ENCODE measurements at regions of chr3 and their contacts with region 1.

Region 1: GRCh38 chr3:65785065-65785645 is 253.6 kb downstream of the MAGI1 start:
- DNase-seq: no peak
- ATAC-seq: peak in 2 of 4 donors; percentile 38 to 53
- H3K4me3 ChIP-seq: no peak overlapping the region
- H3K27ac ChIP-seq: no peak overlapping the region
- H3K4me1 ChIP-seq: peaks cover 0 to 30% (median 12%) of the 10 kb centered on the region in 12 donors
- H3K27me3 ChIP-seq: no peaks in the 10 kb centered on the region
- CTCF ChIP-seq: peak; percentile 63 to 89 (median 76)
- POLR2A ChIP-seq: no peak

Region 2: DNA sequence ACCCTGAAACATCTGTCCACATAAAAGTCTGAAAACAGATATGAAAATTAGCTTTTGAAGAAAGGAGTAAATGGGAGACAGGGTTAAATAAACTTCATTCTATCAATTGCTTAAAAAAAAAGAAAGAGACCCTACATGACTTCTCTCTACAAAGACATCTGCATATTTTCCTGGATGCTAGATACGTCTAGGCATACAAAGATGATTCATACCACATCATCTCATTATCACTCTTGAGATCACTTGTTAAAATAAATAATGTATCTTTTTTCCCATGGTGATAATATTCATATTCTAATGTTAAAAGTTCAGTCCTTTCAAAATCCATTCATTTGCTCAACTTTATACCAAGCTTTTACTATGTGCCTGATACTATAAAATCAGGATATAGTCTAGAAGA is 42.2 kb before region 1 on chr3:
- intact Hi-C with region 1: no loop called
- DNase-seq: no peak
- ATAC-seq: no peak
- H3K4me3 ChIP-seq: no peak overlapping the region
- H3K27ac ChIP-seq: no peak overlapping the region
- H3K4me1 ChIP-seq: peaks cover 0 to 18% (median 2%) of the 10 kb centered on the region in 12 donors
- H3K27me3 ChIP-seq: no peaks in the 10 kb centered on the region
- CTCF ChIP-seq: no peak
- POLR2A ChIP-seq: no peak

Region 3: GRCh38 chr3:65902304-65902793 is 117.2 kb after region 1 on chr3:
- intact Hi-C with region 1: loop called in 1 of 10 experiments (anchors 10 kb)
- DNase-seq: no peak
- ATAC-seq: no peak
- H3K4me3 ChIP-seq: no peak overlapping the region
- H3K27ac ChIP-seq: no peak overlapping the region
- H3K4me1 ChIP-seq: peaks cover 0 to 38% (median 20%) of the 10 kb centered on the region in 12 donors
- H3K27me3 ChIP-seq: no peaks in the 10 kb centered on the region
- CTCF ChIP-seq: no peak
- POLR2A ChIP-seq: no peak

Region 4: DNA sequence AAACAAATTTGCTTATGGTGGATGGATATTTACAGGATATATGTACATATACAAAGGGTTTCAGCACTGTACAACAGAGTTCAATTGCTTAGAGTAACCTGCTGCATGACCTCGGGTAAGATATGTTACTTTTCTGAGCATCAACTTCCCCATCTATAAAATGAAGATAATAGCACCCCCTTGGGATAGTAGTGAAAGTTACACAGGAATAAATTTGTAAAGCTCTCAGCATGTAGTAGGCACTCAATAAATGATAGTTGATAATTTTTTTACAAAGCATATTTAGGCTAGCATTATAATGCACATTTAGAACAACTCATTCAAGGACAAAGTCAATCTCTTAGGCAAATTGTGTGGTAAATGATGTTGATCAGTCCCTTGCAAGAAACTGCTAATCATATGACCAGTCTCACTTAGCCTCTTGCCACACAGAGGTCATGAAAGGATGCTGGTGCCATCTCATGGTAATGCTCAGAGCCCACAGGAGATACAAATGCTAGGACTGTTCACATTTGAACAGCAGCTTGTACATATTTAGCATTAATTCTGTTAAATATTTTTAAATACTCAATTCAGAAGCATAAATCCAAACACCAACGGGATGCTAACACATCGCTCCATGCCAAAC is 129.7 kb after region 1 on chr3:
- intact Hi-C with region 1: loop called in 3 of 10 experiments (anchors 10 kb)
- DNase-seq: no peak
- ATAC-seq: peak in 1 of 4 donors; percentile 53
- H3K4me3 ChIP-seq: no peak overlapping the region
- H3K27ac ChIP-seq: no peak overlapping the region
- H3K4me1 ChIP-seq: peaks cover 0 to 53% (median 22%) of the 10 kb centered on the region in 12 donors
- H3K27me3 ChIP-seq: no peaks in the 10 kb centered on the region
- CTCF ChIP-seq: peak in 1 of 12 donors; percentile 16
- POLR2A ChIP-seq: no peak

Region 5: DNA sequence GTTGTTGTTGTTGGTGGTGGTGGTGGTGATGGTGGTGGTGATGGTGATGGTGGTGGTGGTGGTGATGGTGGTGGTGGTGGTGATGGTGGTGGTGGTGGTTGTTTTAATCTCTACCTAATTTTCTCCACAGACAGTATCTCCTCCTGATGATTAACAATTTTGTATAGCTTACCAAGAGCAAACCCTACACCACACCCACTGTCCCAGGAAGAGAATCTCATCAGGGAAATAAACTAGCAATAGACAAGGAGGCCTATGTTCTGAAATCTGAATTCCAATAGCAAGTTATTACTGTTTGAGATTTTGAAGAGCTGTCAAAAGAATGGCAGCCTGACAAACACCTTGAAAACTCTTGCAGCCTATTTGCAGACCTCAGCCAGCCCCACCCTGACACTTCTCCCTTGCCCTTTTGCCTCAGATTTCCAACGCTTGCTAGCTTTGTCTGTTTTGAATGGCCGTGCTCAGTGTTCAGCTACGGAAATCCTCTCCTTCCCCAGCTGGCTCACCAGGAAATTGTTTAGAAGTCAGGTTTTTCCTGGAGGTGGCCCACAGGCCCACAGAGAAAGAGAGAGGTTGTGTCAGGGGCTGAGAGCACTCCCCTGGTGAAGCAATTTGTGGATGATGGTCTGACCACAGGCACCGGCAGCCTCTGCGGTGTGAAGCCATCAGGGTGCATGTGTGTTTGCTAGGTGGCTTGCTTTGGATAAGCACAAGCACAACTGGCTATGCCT is 151.9 kb after region 1 on chr3:
- intact Hi-C with region 1: no loop called
- DNase-seq: peak in 3 of 5 donors; percentile 37 to 49 (median 42)
- ATAC-seq: peak; percentile 44 to 69 (median 56)
- H3K4me3 ChIP-seq: no peak overlapping the region
- H3K27ac ChIP-seq: peak overlapping the region in 10 of 12 donors; percentile 4 to 61 (median 48)
- H3K4me1 ChIP-seq: peaks cover 0 to 57% (median 35%) of the 10 kb centered on the region in 12 donors
- H3K27me3 ChIP-seq: no peaks in the 10 kb centered on the region
- CTCF ChIP-seq: no peak
- POLR2A ChIP-seq: no peak

Region 6: DNA sequence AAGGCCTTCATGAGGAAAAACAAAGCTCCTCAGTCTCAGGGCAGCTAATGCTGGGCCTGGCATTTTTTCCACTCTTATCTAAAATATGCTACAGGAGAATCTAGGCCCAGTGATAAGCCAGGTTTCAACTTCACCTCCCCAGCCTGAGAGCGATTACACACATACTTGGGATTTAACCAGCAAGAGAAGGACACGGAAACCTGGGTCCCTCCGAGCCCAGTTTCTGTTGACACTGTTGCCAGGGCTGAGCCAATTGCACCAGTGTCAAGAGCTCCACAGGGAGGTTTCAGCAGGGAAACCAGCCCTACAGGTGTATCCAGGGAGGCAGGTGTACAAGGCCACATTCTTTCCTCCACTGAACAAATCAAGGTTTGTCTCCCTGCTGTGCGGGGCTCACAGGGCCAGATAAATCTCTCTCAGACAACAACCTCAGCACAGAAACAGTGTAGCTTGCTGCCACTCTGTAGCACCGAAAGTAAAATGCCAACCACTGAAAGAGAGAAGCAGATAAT is 168.2 kb after region 1 on chr3:
- intact Hi-C with region 1: loop called in 1 of 10 experiments (anchors 10 kb)
- DNase-seq: peak in 3 of 5 donors; percentile 19 to 40 (median 28)
- ATAC-seq: peak; percentile 44 to 59 (median 50)
- H3K4me3 ChIP-seq: peak overlapping the region in 3 of 12 donors; percentile 18 to 35 (median 18)
- H3K27ac ChIP-seq: peak overlapping the region; percentile 29 to 81 (median 75)
- H3K4me1 ChIP-seq: peaks cover 14 to 69% (median 46%) of the 10 kb centered on the region in 12 donors
- H3K27me3 ChIP-seq: no peaks in the 10 kb centered on the region
- CTCF ChIP-seq: no peak
- POLR2A ChIP-seq: no peak

Region 7: DNA sequence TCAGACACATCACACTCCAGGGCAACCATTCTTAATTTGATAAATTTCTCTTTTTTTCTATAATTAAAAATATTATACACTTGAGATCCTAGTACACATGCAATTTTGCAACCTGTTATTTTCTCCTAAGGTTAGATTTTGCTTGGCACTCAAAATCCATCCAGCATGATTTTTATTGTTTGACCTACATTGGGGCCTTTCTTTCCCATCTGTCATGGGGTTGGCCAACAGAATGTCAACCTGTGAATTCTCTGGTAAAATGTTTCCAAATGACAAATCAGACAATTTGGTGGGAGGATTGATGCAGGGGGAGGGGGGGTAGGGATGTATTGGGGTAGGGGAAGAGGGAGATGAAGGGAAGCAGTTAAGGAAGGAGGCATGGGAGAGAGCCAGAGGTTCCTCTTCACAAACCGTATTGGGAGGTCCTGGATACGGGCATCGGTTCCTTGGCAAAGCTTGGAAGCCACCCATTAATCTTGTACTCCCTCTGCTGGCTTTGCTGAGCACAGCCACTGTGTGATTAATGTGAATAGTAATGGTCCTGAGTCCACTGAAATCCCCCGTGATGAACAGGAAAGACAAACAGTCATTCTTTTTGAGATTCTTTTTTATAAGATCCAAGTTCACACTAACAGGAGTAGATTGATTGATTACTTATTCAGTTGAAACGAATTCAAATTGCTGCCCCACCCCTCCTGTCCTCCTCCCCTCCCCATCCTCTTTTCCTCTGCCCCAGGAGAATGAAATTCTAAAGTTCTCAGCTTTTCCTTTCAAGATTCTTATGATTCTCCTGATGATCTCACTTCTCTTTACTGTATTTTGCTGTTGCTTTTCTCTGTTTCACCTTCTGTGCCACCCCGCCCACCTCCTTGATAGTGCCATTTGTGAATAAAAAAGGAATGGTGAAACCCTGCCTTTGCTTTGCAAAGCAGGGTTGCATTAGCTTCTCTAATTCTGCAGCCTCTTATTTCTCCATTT is 353.5 kb after region 1 on chr3:
- intact Hi-C with region 1: loop called (anchors 1 to 5 kb)
- DNase-seq: peak in 4 of 5 donors; percentile 42 to 63 (median 54)
- ATAC-seq: peak; percentile 75 to 93 (median 89)
- H3K4me3 ChIP-seq: no peak overlapping the region
- H3K27ac ChIP-seq: peak overlapping the region in 5 of 12 donors; percentile 6 to 21 (median 11)
- H3K4me1 ChIP-seq: peaks cover 0 to 15% (median 2%) of the 10 kb centered on the region in 12 donors
- H3K27me3 ChIP-seq: no peaks in the 10 kb centered on the region
- CTCF ChIP-seq: peak; percentile 49 to 89 (median 80)
- POLR2A ChIP-seq: no peak

Region 8: GRCh38 chr3:66195347-66195783 is 410.2 kb after region 1 on chr3:
- intact Hi-C with region 1: loop called in 9 of 10 experiments (anchors 5 to 10 kb)
- DNase-seq: peak; percentile 57 to 81 (median 72)
- ATAC-seq: peak; percentile 41 to 76 (median 73)
- H3K4me3 ChIP-seq: peak overlapping the region in 11 of 12 donors; percentile 1 to 56 (median 41)
- H3K27ac ChIP-seq: peak overlapping the region in 11 of 12 donors; percentile 20 to 85 (median 57)
- H3K4me1 ChIP-seq: peaks cover 0 to 4% (median 0%) of the 10 kb centered on the region in 12 donors
- H3K27me3 ChIP-seq: peaks cover 0 to 10% (median 0%) of the 10 kb centered on the region in 9 donors
- CTCF ChIP-seq: peak in 5 of 12 donors; percentile 13 to 48 (median 27)
- POLR2A ChIP-seq: no peak

Measured in heart left ventricle (tissue), 16 donors.